ENCODE measurements at regions of chr1 and their contacts with region 1.

Region 1: DNA sequence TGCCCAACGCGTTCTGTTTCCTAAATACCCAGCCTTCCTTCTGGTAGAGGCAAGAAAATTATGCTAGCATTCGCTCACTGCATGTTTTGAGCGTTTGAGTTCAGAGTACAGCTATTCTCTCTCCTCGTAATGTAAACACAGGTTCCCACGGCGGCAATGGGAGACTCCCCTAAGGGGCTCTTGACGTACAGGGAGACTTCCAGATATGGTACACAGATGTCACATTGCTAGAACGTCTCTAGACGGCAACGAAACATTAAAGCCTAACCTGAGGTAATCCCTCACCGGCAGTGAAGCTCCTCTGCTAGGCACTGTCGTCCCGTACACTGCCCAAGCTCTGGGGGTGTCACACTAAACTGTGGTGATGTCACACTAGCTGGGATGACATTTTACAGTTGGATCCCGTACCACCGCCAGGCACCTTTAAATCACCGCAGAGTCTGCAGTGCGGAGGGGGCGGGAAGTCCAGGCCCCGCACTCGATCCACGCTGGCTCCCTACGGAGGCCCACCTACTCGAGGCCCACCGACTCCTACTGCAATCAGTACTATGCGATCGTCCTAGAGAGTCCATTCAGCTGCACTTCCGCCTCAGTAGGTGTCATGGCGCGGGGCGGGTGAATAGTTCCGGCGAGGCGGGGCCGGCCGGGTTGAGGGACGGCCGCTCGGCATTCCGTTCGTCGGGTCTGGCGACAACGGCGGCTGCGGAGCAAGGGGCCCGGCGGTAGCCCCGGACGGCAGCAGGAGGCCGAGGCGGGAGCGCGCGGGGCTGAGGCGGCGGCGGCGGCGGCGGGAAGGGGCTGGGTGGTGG is at the start of gene HIPK1:
- DNase-seq: peak; percentile 60
- ATAC-seq: peak; percentile 73
- H3K4me3 ChIP-seq: peak within 1 kb of the TSS; percentile 78
- H3K27ac ChIP-seq: peak within 1 kb of the TSS; percentile 97
- H3K4me1 ChIP-seq: peaks cover 4% of the 10 kb centered on the region
- H3K27me3 ChIP-seq: no peaks in the 10 kb centered on the region
- CTCF ChIP-seq: no peak
- EP300 ChIP-seq: 0 out of 4 replicates have a peak, but pooled peaks of 1 of the 2 experiments have one; percentile 36
- POLR2A ChIP-seq: peak; percentile 88
- RAD21 ChIP-seq: 0 out of 2 replicates have a peak, but pooled peaks have one; percentile 7
- polyA plus RNA-seq, gene HIPK1: 4.2 to 4.5 TPM

Region 2: DNA sequence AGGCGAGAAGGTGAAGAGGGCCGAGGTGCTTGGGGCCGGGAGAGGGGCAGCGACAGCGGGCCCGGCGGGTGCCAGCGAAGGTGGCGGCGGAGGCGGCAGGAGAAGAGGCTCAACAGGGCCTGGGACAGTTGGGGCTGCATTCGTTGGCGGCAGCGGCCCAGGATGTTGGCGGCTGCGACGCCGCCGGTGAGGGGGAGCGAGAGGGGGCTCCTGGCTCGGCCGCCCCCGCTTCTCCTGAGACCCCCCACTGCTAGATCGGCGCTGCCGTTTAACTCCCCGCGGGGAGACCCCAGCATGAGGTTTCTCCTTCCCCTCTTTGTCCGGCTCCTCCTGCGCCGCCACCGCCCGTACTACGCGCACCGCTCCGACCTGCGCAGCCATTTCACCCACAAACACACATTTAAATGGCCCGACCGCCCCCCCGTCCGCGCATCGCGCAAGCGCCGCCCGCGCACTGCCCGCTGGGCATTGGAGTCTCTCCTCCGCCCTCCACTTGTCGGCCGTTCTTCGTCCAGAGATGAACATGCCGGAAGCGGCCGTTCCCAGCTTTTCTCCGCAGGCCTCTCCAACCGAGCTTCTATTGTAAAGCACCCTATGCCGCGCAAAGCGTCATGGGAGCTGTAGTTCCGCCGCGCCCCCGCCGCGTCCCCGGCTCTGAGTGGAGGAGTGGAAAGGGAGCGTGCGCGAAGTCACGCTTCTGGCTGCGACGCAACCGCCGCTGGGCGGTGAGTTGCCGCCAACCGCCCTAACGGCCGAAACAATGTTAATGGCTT is 117.1 kb before region 1 on chr1 and contains the start of gene RSBN1:
- CTCF ChIA-PET with region 1: interaction called, 4 read pairs
- POLR2A ChIA-PET with region 1: interaction called, 6 read pairs
- RAD21 ChIA-PET with region 1: interaction called, 16 read pairs
- SMC1A ChIA-PET with region 1: interaction called, 4 read pairs
- in situ Hi-C with region 1: no loop called
- intact Hi-C with region 1: no loop called
- DNase-seq: peak; percentile 96
- ATAC-seq: peak; percentile 92
- H3K4me3 ChIP-seq: peak within 1 kb of the TSS; percentile 92
- H3K27ac ChIP-seq: peak within 1 kb of the TSS; percentile 72
- H3K4me1 ChIP-seq: no peaks in the 10 kb centered on the region
- H3K27me3 ChIP-seq: no peaks in the 10 kb centered on the region
- CTCF ChIP-seq: no peak
- EP300 ChIP-seq: peak in 1 of 2 experiments; percentile 80; a peak in 2 of 4 replicates
- POLR2A ChIP-seq: peak; percentile 96
- RAD21 ChIP-seq: no peak
- polyA plus RNA-seq, gene RSBN1: 2.9 to 10.5 TPM

Region 3: GRCh38 chr1:113859478-113860175 is 69.5 kb before region 1 on chr1:
- CTCF ChIA-PET with region 1: interaction called, 32 read pairs
- POLR2A ChIA-PET with region 1: interaction called, 29 read pairs
- RAD21 ChIA-PET with region 1: interaction called, 46 read pairs
- SMC1A ChIA-PET with region 1: interaction called, 42 read pairs
- in situ Hi-C with region 1: no loop called
- intact Hi-C with region 1: no loop called
- DNase-seq: peak; percentile 87
- ATAC-seq: peak; percentile 91
- H3K4me3 ChIP-seq: peak overlapping the region; percentile 51
- H3K27ac ChIP-seq: peak overlapping the region; percentile 84
- H3K4me1 ChIP-seq: peaks cover 50% of the 10 kb centered on the region
- H3K27me3 ChIP-seq: no peaks in the 10 kb centered on the region
- CTCF ChIP-seq: no peak; a peak in 1 of 6 replicates
- EP300 ChIP-seq: peak; percentile 30 to 91; a peak in 3 of 4 replicates
- POLR2A ChIP-seq: no peak
- RAD21 ChIP-seq: no peak

Region 4: DNA sequence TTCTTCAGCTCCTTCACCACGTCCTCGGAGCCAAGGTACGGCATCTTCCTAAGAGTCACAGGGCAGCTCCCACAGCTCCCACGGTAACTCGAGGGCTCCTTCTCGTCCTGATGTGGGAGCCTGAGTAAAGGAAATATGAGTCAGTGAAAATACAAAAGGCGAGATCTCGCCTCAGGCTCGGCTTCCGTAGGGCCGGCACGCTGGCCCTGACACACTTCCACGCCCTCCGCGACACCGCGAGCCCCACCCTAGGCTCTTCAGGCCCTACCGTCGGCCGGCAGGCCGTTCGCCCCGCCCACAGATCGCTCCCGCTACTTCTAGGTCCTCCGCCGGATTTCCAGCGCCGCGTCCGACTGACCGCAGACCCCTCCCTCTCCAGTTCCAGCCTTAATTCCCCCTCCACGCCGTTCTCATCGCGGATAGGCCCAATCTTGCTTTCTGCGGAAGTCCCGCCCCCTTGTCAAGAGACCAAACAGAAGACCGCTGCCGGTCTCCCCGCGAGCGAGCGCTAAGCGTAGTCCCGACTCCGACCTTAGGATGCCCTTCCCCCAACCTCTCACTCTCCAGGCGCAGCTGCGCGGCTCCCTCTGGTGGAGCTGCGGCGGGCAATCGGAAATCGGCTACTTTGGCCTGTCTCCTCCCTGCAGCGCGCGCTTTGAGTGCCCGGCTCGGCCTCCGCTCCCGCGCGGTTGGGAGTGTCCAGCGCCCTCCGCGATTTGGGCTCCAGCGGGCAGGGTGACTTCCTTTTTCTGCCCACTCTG is 24.3 kb before region 1 on chr1 and contains the starts of genes AP4B1 and DCLRE1B:
- CTCF ChIA-PET with region 1: interaction called, 44 read pairs
- POLR2A ChIA-PET with region 1: interaction called, 65 read pairs
- RAD21 ChIA-PET with region 1: interaction called, 39 read pairs
- SMC1A ChIA-PET with region 1: interaction called, 103 read pairs
- in situ Hi-C with region 1: no loop called
- intact Hi-C with region 1: loop called (anchors 1 kb)
- DNase-seq: peak; percentile 99
- ATAC-seq: peak; percentile 94
- H3K4me3 ChIP-seq: peak within 1 kb of the TSS; percentile 91
- H3K27ac ChIP-seq: peak within 1 kb of the TSS; percentile 88
- H3K4me1 ChIP-seq: peaks cover 3% of the 10 kb centered on the region
- H3K27me3 ChIP-seq: no peaks in the 10 kb centered on the region
- CTCF ChIP-seq: peak; percentile 63 to 98 (median 67)
- EP300 ChIP-seq: peak in 1 of 2 experiments; percentile 69; a peak in 1 of 4 replicates
- POLR2A ChIP-seq: peak; percentile 77
- RAD21 ChIP-seq: peak; percentile 93
- polyA plus RNA-seq, gene AP4B1: 27.2 to 29.0 TPM
- polyA plus RNA-seq, gene DCLRE1B: 5.4 to 7.4 TPM

Region 5: DNA sequence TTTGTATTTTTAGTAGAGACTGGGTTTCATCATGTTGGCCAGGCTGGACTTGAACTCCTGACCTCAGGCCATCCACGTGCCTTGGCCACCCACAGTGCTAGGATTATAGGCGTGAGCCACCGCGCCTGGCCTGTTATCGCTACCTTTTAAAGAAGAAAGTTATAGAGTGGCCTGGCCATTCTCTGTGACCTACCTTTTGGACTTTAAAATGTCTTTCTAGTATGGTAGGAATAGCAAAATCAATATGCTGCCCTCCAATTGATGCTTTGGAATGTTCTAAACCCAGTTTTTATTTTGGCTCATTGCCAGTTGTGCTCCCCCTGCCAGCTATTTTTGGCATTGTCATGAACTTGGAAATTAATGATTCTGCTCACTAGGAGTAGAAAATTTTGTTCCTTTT is 19.9 kb after region 1 on chr1:
- CTCF ChIA-PET with region 1: interaction called, 19 read pairs
- POLR2A ChIA-PET with region 1: interaction called, 34 read pairs
- RAD21 ChIA-PET with region 1: interaction called, 27 read pairs
- SMC1A ChIA-PET with region 1: interaction called, 99 read pairs
- in situ Hi-C with region 1: no loop called
- intact Hi-C with region 1: no loop called
- DNase-seq: no peak
- ATAC-seq: no peak
- H3K4me3 ChIP-seq: no peak overlapping the region
- H3K27ac ChIP-seq: no peak overlapping the region
- H3K4me1 ChIP-seq: peaks cover 24% of the 10 kb centered on the region
- H3K27me3 ChIP-seq: no peaks in the 10 kb centered on the region
- CTCF ChIP-seq: 0 out of 6 replicates have a peak, but pooled peaks of 1 of the 3 experiments have one; percentile 10
- EP300 ChIP-seq: no peak
- POLR2A ChIP-seq: no peak
- RAD21 ChIP-seq: no peak

Region 6: DNA sequence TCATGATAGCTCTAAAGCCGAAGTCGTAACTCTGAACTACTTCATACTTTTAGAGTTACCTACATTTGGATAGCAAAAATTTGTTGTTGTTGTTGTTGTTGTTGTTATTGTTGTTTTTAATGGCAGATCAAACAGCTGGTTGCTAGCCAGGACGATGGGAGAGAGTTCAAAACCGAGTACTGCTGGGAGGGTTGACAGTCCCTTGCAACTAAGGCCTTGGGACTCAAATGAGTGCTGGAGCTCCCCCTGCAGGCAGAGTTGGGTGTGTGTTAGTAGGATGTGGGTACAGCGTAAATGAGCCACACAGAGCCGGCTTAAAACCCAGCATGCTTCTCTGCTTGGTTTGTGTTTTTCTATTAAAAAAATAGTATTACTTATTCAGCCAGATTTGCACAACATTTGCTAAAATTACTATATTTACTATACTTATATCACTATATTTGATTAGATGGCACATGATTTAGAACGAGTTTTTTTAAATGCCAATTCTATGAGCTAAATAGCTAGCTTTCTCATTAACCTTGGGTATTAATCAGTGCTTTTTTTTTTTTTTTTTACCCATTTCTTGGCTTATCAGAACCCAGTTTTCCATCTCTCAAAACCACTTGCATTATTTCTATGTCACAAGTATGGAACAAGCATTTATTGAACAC is 353.7 kb after region 1 on chr1:
- CTCF ChIA-PET with region 1: interaction called, 15 read pairs
- POLR2A ChIA-PET with region 1: no interaction called
- RAD21 ChIA-PET with region 1: interaction called, 4 read pairs
- SMC1A ChIA-PET with region 1: no interaction called
- in situ Hi-C with region 1: no loop called
- intact Hi-C with region 1: no loop called
- DNase-seq: peak; percentile 36
- ATAC-seq: peak; percentile 100
- H3K4me3 ChIP-seq: no peak overlapping the region
- H3K27ac ChIP-seq: no peak overlapping the region
- H3K4me1 ChIP-seq: no peaks in the 10 kb centered on the region
- H3K27me3 ChIP-seq: no peaks in the 10 kb centered on the region; a peak in 1 of 4 replicates
- CTCF ChIP-seq: peak; percentile 80 to 89 (median 88)
- EP300 ChIP-seq: no peak
- POLR2A ChIP-seq: no peak
- RAD21 ChIP-seq: peak; percentile 88

Region 7: DNA sequence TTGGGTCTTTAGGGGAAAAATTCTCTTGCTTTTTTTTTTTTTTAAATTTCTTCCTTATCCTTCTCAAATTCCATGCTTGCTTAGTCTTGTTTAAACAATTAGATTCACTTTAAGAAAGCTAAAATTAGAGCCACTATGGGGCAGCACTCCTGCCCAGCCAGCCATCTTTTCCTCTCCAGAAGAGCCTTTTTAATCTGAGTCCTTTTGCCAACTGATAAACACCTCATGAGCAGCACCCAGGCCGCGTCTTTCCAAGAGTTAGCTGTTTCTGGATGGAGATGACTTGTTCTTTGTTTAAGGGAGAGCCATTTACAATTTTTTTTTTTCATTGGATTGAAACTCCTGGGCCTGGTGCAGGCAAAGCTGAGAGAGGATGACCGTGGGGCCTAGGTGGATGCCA is 1213.5 kb after region 1 on chr1:
- CTCF ChIA-PET with region 1: no interaction called
- POLR2A ChIA-PET with region 1: no interaction called
- RAD21 ChIA-PET with region 1: no interaction called
- SMC1A ChIA-PET with region 1: no interaction called
- in situ Hi-C with region 1: no loop called
- intact Hi-C with region 1: no loop called
- DNase-seq: no peak
- ATAC-seq: no peak
- H3K4me3 ChIP-seq: no peak overlapping the region
- H3K27ac ChIP-seq: no peak overlapping the region
- H3K4me1 ChIP-seq: no peaks in the 10 kb centered on the region
- H3K27me3 ChIP-seq: no peaks in the 10 kb centered on the region
- CTCF ChIP-seq: no peak
- EP300 ChIP-seq: no peak
- POLR2A ChIP-seq: no peak
- RAD21 ChIP-seq: no peak